Caco-2 (cell line): ENCODE measurements at regions of chr5 and their contacts with region 1.

Region 1: DNA sequence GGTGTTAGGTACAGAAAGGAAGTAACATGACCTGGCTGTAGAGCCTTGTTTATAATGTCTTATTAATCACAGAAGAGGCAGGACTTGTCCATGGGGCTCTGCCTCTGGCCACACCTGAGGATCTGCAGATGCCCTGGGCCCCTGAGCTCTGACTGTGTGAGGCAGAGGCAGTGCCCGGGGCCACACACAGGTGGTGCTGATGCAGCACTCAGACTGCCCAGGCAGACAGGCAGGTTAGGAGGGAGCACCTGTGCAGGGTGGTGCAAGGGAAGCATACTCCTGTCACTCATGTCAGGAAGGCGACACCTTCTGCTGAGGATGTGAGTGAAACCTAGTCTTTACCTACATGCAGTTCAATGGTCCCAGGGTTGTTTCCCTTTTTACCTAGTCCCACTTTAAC is 88.7 kb downstream of the CFAP90 start:
- DNase-seq: peak in 1 of 2 experiments; percentile 18
- H3K4me3 ChIP-seq: no peak overlapping the region
- H3K4me3 Mint-ChIP-seq: no peak overlapping the region
- H3K27ac Mint-ChIP-seq: no peak overlapping the region
- H3K4me1 ChIP-seq: no peaks in the 10 kb centered on the region
- H3K4me1 Mint-ChIP-seq: no peaks in the 10 kb centered on the region
- H3K27me3 ChIP-seq: 0 out of 2 replicates have a peak, but pooled peaks cover 1% of the 10 kb centered on the region
- H3K27me3 Mint-ChIP-seq: peaks cover 23% of the 10 kb centered on the region
- CTCF ChIP-seq: no peak

Region 2: DNA sequence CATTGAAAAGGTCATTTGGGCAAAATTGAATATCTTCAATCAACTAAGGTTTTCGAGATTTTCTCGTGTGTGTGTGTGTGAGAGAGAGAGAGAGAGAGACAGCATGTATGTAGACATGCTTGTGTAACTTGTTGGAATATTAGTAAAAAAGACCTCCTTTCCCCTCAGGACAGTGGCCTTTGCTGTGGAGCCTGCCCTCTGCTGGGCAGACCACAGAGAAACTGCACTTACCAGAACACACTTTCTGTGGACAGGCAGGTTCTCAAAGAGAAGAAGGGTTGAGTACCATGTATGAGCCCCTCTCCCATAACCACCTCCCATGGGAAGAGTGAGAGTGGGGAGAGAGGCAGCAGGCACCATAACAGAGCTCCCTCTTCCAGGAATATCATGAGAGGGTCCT is 43.1 kb after region 1 on chr5:
- CTCF ChIA-PET with region 1: no interaction called
- POLR2A ChIA-PET with region 1: no interaction called
- intact Hi-C with region 1: loop called (anchors 5 kb)
- DNase-seq: peak in 1 of 2 experiments; percentile 5
- H3K4me3 ChIP-seq: no peak overlapping the region
- H3K4me3 Mint-ChIP-seq: no peak overlapping the region
- H3K27ac Mint-ChIP-seq: no peak overlapping the region
- H3K4me1 ChIP-seq: no peaks in the 10 kb centered on the region
- H3K4me1 Mint-ChIP-seq: no peaks in the 10 kb centered on the region
- H3K27me3 ChIP-seq: no peaks in the 10 kb centered on the region
- H3K27me3 Mint-ChIP-seq: peaks cover 6% of the 10 kb centered on the region
- CTCF ChIP-seq: peak; percentile 25 to 49

Region 3: GRCh38 chr5:7856855-7857254 is 94.6 kb after region 1 on chr5:
- CTCF ChIA-PET with region 1: no interaction called
- POLR2A ChIA-PET with region 1: no interaction called
- intact Hi-C with region 1: loop called (anchors 10 kb)
- DNase-seq: peak in 1 of 2 experiments; percentile 54
- H3K4me3 ChIP-seq: no peak overlapping the region
- H3K4me3 Mint-ChIP-seq: no peak overlapping the region
- H3K27ac Mint-ChIP-seq: no peak overlapping the region
- H3K4me1 ChIP-seq: no peaks in the 10 kb centered on the region
- H3K4me1 Mint-ChIP-seq: peaks cover 5% of the 10 kb centered on the region
- H3K27me3 ChIP-seq: no peaks in the 10 kb centered on the region
- H3K27me3 Mint-ChIP-seq: no peaks in the 10 kb centered on the region
- CTCF ChIP-seq: peak; percentile 45 to 51